ENCODE measurements at regions of chr12 and their contacts with region 1.

Region 1: DNA sequence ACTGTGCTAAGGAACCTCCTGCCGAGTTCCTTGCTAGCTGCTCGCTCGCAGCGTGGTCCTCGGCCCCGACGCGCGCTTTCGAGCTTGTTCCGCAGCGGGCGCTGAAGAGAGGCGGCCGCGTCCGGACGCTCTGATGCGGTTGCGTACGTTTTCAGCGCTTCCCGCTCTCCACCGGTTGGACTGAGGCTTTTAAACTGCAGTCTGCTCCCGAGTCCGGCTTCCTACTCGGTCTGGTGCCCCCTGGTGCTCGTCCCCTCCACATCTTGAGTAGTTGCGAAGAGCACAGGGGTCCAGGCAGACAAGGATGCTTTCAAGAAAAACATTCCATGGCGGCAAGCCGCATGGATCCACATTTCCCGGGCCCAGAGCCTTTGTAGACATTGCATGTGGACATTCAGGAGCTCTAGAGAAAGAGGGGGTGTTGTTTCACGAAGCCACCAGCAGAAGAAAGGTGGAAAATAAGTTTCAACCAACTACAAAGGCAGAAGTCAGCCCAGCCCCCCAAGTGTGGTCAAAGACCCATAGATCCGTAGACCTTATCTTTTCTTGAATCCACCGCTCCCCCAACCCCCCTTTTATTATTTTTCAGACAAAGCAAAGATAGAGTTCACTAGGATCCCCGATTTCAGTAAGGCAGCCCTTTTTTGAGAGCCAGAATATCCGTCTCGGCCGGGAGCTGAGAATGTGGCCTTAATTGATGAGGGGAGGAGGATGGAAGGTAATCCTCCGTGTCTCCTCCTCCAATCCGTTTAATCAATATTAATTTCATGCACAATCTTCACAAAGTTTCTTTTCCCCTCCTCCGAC is 984 bp upstream of the WNK1 start:
- DNase-seq: peak; percentile 88
- ATAC-seq: peak; percentile 66
- H3K4me3 Mint-ChIP-seq: no peak overlapping the region
- H3K27ac Mint-ChIP-seq: no peak overlapping the region
- H3K4me1 Mint-ChIP-seq: peaks cover 22% of the 10 kb centered on the region
- H3K27me3 Mint-ChIP-seq: no peaks in the 10 kb centered on the region

Region 2: DNA sequence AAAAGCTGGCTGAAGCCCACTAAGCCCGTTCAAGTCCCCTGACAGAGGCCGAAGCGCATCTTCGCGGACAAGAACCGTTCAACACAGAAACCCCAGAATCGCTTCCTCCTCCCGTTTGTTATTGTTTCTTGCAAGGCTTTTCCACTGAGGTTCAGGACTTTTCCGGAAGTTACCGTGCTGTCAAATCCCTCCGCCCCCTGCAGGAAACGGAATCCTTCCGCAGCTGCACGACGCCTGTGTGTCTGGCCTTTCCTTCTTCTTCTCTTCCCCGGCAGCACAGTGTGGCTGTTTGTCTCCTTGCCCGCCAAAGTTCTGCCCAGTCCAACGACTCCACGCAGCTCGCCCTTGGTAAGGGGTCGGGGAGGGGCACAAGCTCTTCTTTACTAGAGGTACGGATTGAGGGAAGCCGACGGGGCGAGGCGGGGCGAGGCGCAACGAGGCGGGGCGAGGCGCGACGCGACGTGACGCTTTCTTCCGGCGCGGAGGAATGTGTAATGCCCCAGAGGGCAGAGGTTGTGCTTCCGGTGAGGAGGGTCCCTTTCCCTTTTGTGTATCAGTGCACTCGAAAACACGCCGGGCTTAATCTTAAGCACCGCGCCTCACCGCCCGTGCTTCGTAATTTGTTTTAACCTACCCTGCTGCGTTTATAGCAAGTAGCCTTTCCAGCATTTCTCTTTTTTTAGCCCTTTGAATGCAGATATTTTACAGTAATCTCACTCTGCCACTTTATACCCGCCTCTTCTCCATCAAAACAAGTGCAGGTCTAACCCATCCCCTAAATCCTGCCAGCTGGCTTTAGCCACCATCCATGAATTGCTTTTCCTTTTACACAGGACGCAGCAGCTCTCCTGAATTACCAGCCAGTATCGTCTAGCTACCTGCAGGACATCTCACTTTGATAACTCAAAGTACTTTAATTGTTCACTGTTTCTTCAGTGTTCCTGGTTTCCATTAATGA is 362.0 kb before region 1 on chr12 and contains the start of gene KDM5A:
- POLR2A ChIA-PET with region 1: interaction called, 10 read pairs
- DNase-seq: peak; percentile 93
- ATAC-seq: peak; percentile 92
- H3K4me3 Mint-ChIP-seq: peak within 1 kb of the TSS; percentile 95
- H3K27ac Mint-ChIP-seq: peak within 1 kb of the TSS; percentile 100
- H3K4me1 Mint-ChIP-seq: peaks cover 33% of the 10 kb centered on the region
- H3K27me3 Mint-ChIP-seq: no peaks in the 10 kb centered on the region
- total RNA-seq, gene KDM5A: 105 to 116 TPM

Region 3: DNA sequence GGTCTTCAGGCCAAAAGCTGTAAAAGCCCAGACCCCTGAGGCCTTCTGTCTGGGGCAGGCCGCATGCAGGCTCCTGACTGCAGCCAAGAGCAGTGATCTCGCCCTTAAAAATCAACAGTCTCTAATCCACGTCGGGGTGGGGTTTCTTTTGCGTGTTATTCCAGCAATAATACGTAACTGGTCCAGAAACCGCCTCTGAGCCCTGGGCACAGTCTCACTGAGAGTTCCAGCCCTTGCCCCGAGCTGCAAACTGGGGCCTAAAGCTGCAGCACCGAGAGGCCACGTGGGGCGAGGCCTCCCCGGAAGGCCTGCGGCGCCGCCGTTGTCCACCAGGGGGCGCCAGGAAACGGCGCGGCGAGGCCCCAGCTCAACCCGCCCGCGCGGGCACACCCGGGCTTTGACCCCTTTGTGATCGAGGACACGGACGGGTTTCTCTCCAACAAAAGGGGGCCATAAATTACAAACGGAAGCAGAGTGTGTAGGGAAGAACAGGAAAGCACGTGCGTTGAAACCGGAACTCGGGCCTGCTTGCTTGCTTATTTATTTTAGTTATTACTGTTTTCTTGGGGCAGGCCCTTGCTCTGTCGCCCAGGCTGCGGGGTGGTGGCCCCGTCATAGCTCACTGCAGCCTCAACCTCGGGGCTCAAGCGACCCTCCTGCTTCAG is 175.3 kb before region 1 on chr12:
- POLR2A ChIA-PET with region 1: interaction called, 38 read pairs
- DNase-seq: peak; percentile 97
- ATAC-seq: peak; percentile 92
- H3K4me3 Mint-ChIP-seq: peak overlapping the region; percentile 59
- H3K27ac Mint-ChIP-seq: peak overlapping the region; percentile 78
- H3K4me1 Mint-ChIP-seq: peaks cover 34% of the 10 kb centered on the region
- H3K27me3 Mint-ChIP-seq: no peaks in the 10 kb centered on the region

Region 4: DNA sequence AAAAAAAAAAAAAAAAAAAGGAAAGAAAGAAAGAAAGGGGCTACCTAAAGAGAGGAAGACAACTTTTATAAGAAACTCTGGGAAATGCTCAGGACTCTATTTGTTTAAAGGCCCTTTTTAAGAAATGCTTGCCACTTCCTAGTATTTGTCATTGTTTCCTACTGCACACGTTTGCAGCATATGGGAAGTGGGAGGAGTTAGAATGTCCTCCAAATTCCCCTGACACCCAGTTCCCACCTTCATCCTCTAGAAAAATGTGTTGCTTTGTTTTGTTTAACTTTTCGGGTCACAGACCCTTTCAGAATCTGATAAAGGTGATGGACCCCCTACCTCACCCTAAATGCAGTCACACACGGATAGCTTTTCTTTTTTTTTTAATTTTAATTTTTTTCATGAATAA is 129.0 kb before region 1 on chr12:
- POLR2A ChIA-PET with region 1: interaction called, 22 read pairs
- DNase-seq: no peak
- ATAC-seq: peak; percentile 59
- H3K4me3 Mint-ChIP-seq: peak overlapping the region; percentile 56
- H3K27ac Mint-ChIP-seq: peak overlapping the region; percentile 87
- H3K4me1 Mint-ChIP-seq: peaks cover 44% of the 10 kb centered on the region
- H3K27me3 Mint-ChIP-seq: no peaks in the 10 kb centered on the region

Region 5: GRCh38 chr12:650983-651382 is 100.4 kb before region 1 on chr12:
- POLR2A ChIA-PET with region 1: interaction called, 44 read pairs
- DNase-seq: no peak
- ATAC-seq: peak; percentile 33
- H3K4me3 Mint-ChIP-seq: no peak overlapping the region
- H3K27ac Mint-ChIP-seq: no peak overlapping the region
- H3K4me1 Mint-ChIP-seq: peaks cover 11% of the 10 kb centered on the region
- H3K27me3 Mint-ChIP-seq: peaks cover 3% of the 10 kb centered on the region

Region 6: GRCh38 chr12:674272-674781 is 77.1 kb before region 1 on chr12:
- POLR2A ChIA-PET with region 1: interaction called, 81 read pairs
- DNase-seq: peak; percentile 63
- ATAC-seq: peak; percentile 96
- H3K4me3 Mint-ChIP-seq: peak overlapping the region; percentile 84
- H3K27ac Mint-ChIP-seq: peak overlapping the region; percentile 99
- H3K4me1 Mint-ChIP-seq: peaks cover 52% of the 10 kb centered on the region
- H3K27me3 Mint-ChIP-seq: no peaks in the 10 kb centered on the region

Region 7: DNA sequence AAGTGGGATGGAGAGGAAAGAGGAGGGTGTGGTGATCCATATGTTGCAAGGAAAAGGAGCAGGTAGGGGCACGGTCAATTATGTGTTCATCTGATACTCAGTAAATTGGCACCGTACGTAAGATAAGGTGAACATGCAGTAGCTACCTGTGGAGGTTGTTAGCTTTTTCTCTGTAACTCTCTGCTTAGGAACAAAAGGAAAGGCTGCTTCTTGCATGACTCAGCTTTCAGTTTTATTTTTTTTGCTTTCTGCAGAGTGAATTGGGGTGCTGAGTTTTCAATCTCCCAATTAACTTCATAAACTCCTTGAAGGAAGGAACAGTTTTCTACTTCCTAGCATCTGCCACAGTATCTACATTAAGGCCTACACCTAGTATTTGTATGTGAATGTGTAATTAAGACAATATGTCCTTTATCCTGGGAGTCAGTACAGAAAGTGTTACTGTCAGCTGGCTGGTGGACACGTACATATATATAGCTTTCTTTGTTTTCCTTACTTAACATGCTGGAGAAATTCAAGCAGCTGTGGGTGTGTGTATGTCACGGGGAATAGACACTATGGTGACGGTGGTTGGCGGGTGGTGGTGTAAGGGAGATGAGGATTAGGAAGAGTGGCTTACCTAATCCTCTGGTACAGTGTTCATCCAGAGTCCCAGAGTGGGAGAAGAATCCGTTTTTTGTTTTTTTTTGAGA is 39.1 kb before region 1 on chr12:
- POLR2A ChIA-PET with region 1: interaction called, 10 read pairs
- DNase-seq: no peak
- ATAC-seq: no peak
- H3K4me3 Mint-ChIP-seq: no peak overlapping the region
- H3K27ac Mint-ChIP-seq: peak overlapping the region; percentile 6
- H3K4me1 Mint-ChIP-seq: peaks cover 17% of the 10 kb centered on the region
- H3K27me3 Mint-ChIP-seq: no peaks in the 10 kb centered on the region

Measured in activated naive CD8-positive, alpha-beta T cell treated with anti-CD3 and anti-CD28 coated beads, Interleukin-2, amount 10 ng/mL, durations not matched to agents 7 days and 5 days (primary cell).